ENCODE measurements at regions of chr12 and their contacts with region 1.

Region 1: GRCh38 chr12:19288603-19289244 is 150.6 kb upstream of the AEBP2 start:
- DNase-seq: peak in 1 of 2 experiments; percentile 30
- H3K4me3 ChIP-seq: no peak overlapping the region
- H3K4me3 Mint-ChIP-seq: no peak overlapping the region
- H3K27ac Mint-ChIP-seq: no peak overlapping the region
- H3K4me1 ChIP-seq: peaks cover 4% of the 10 kb centered on the region; the same call in 1 of the 2 replicates
- H3K4me1 Mint-ChIP-seq: no peaks in the 10 kb centered on the region
- H3K27me3 ChIP-seq: no peaks in the 10 kb centered on the region
- H3K27me3 Mint-ChIP-seq: no peaks in the 10 kb centered on the region
- CTCF ChIP-seq: peak; percentile 73 to 83

Region 2: DNA sequence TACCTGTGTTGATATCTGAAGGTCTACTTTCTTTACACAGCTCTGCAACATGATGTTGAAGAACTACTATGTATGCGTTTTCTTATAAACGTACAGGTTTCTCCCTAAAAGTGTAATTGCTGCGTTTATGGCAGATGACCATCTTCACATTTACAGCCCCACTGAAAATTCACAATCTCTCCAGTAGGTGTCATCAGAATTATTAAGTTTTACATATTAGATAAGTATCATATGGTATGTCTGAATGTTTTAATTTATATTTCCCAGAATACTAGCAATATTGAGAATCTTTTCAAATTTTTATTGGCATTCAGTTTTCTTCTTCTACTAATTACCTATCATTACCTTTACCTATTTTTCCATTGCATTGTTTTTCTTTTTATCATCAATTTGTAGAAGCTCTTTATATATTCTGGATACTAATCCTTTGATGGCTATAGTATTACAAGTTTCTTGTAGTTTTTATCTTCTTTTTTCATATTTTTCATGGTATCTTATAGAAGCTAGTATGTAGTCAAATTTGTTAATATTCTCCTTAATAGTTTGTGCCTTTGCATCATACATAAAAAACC is 427.4 kb before region 1 on chr12:
- CTCF ChIA-PET with region 1: no interaction called
- POLR2A ChIA-PET with region 1: no interaction called
- intact Hi-C with region 1: loop called (anchors 1 kb)
- DNase-seq: peak in 1 of 2 experiments; percentile 56
- H3K4me3 ChIP-seq: no peak overlapping the region
- H3K4me3 Mint-ChIP-seq: no peak overlapping the region
- H3K27ac Mint-ChIP-seq: no peak overlapping the region
- H3K4me1 ChIP-seq: no peaks in the 10 kb centered on the region
- H3K4me1 Mint-ChIP-seq: no peaks in the 10 kb centered on the region
- H3K27me3 ChIP-seq: no peaks in the 10 kb centered on the region; the same call in 1 of the 2 replicates
- H3K27me3 Mint-ChIP-seq: peaks cover 13% of the 10 kb centered on the region
- CTCF ChIP-seq: peak; percentile 66 to 92